K562 (cell line): ENCODE measurements at regions of chr7 and their contacts with region 1.

Region 1: DNA sequence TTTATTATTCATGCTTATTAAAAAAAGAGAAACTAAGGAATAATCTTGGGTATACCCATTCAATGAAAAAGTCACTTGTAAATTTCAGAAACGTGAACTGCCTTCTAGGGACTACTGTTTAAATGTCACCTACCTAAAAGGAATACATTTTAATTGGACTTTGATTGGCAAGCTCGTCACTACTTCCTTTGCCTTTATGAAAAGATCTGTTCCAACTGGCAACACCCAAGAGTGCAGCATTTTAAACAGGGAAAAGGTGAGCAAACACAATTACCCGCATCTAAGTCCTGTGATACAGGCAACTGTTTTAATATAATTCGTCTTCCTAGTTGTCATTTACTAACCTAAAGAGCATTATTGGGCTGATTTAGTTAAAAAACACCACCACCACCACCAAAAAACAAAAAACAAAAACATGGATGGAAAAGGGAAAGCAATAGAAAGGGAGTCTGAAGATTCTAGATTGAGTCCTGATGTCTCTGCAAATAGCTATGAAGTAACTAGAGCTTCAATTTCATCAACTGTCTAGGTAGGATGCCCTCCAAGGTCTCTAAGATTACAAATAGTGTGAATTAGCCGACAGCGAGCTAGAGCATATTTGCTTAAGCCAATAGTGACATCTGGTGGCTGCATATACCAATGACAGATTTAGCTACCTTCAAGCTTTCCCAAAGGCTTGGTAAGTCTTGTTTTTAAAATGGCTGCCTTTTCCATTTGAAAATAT is 33.8 kb upstream of the ICA1 start:
- DNase-seq: peak; percentile 50 to 87 (median 62)
- ATAC-seq: peak; percentile 99
- H3K4me3 ChIP-seq: no peak overlapping the region
- H3K27ac ChIP-seq: no peak overlapping the region
- H3K4me1 ChIP-seq: peaks cover 0 to 3% of the 10 kb centered on the region in 2 experiments; a peak in 1 of 5 replicates
- H3K27me3 ChIP-seq: no peaks in the 10 kb centered on the region
- CTCF ChIP-seq: peak; percentile 70 to 89 (median 80)
- EP300 ChIP-seq: no peak
- POLR2A ChIP-seq: no peak
- RAD21 ChIP-seq: peak; percentile 97 to 98

Region 2: GRCh38 chr7:7424151-7424873 is 871.5 kb before region 1 on chr7:
- CTCF ChIA-PET with region 1: no interaction called
- POLR2A ChIA-PET with region 1: no interaction called
- in situ Hi-C with region 1: loop called (anchors 10 kb)
- intact Hi-C with region 1: loop called (anchors 1 kb)
- DNase-seq: peak; percentile 21 to 76 (median 40)
- ATAC-seq: peak; percentile 97
- H3K4me3 ChIP-seq: peak overlapping the region; percentile 34
- H3K27ac ChIP-seq: no peak overlapping the region
- H3K4me1 ChIP-seq: peaks cover 0 to 5% of the 10 kb centered on the region in 2 experiments; a peak in 2 of 5 replicates
- H3K27me3 ChIP-seq: peaks cover 0 to 6% of the 10 kb centered on the region in 2 experiments; a peak in 4 of 5 replicates
- CTCF ChIP-seq: peak; percentile 71 to 87 (median 86)
- EP300 ChIP-seq: no peak
- POLR2A ChIP-seq: no peak
- RAD21 ChIP-seq: peak; percentile 83 to 90

Region 3: GRCh38 chr7:7595451-7595850 is 700.3 kb before region 1 on chr7:
- CTCF ChIA-PET with region 1: interaction called, 3 read pairs
- POLR2A ChIA-PET with region 1: no interaction called
- in situ Hi-C with region 1: no loop called
- intact Hi-C with region 1: loop called (anchors 5 kb)
- DNase-seq: peak; percentile 14 to 40 (median 24)
- ATAC-seq: peak; percentile 61; the same call in 2 of the 3 replicates
- H3K4me3 ChIP-seq: no peak overlapping the region
- H3K27ac ChIP-seq: no peak overlapping the region
- H3K4me1 ChIP-seq: no peaks in the 10 kb centered on the region
- H3K27me3 ChIP-seq: no peaks in the 10 kb centered on the region
- CTCF ChIP-seq: peak in 1 of 3 experiments; percentile 52; a peak in 2 of 6 replicates
- EP300 ChIP-seq: no peak
- POLR2A ChIP-seq: no peak
- RAD21 ChIP-seq: peak; percentile 53 to 75

Region 4: DNA sequence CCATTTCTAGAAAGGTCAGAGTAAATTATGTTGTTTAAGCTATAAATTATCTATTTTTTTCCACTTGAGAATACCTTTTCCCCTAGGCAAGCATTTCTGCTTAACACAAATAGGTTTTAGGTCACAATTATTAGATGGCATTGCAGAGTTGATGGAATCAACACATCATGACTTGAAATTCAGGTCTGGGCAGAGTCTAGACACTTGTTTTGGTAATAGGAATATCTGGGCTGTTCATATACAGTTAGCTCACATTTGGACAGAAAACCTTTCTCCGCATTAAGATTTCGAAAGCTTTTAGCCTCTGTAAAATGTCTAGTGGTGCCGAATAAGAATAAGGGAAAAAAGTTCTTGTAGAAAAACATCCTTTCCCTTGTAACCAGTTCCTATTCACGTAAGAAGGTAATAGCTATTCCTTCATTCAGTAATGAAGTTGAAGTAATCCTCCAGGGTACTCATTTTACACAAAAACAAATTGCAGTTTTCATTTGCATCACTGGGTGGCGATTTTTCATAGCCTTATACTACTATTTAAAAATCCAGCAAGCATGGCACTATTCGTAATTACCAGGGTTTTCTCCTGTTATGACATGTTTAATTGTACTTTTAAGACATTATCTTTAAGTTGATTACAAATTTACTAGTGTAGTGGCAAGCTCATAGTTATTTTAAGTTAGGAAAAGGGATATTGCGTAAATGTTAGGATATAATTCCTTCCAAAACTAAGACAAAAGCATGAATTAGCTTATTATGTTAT is 614.4 kb before region 1 on chr7:
- CTCF ChIA-PET with region 1: no interaction called
- POLR2A ChIA-PET with region 1: no interaction called
- in situ Hi-C with region 1: no loop called
- intact Hi-C with region 1: loop called (anchors 5 kb)
- DNase-seq: peak in 2 of 4 experiments; percentile 22 to 62
- ATAC-seq: peak; percentile 88
- H3K4me3 ChIP-seq: no peak overlapping the region
- H3K27ac ChIP-seq: peak overlapping the region; percentile 32; the same call in 1 of the 3 replicates
- H3K4me1 ChIP-seq: peaks cover 0 to 2% of the 10 kb centered on the region in 2 experiments; a peak in 1 of 5 replicates
- H3K27me3 ChIP-seq: no peaks in the 10 kb centered on the region
- CTCF ChIP-seq: peak; percentile 21 to 66 (median 46); a peak in 4 of 6 replicates
- EP300 ChIP-seq: no peak
- POLR2A ChIP-seq: no peak
- RAD21 ChIP-seq: peak; percentile 77 to 84

Region 5: GRCh38 chr7:7895754-7896153 is 400.0 kb before region 1 on chr7:
- CTCF ChIA-PET with region 1: no interaction called
- POLR2A ChIA-PET with region 1: no interaction called
- in situ Hi-C with region 1: no loop called
- intact Hi-C with region 1: loop called (anchors 10 kb)
- DNase-seq: no peak
- ATAC-seq: no peak
- H3K4me3 ChIP-seq: no peak overlapping the region
- H3K27ac ChIP-seq: no peak overlapping the region
- H3K4me1 ChIP-seq: no peaks in the 10 kb centered on the region
- H3K27me3 ChIP-seq: no peaks in the 10 kb centered on the region
- CTCF ChIP-seq: no peak
- EP300 ChIP-seq: no peak
- POLR2A ChIP-seq: no peak
- RAD21 ChIP-seq: no peak

Region 6: DNA sequence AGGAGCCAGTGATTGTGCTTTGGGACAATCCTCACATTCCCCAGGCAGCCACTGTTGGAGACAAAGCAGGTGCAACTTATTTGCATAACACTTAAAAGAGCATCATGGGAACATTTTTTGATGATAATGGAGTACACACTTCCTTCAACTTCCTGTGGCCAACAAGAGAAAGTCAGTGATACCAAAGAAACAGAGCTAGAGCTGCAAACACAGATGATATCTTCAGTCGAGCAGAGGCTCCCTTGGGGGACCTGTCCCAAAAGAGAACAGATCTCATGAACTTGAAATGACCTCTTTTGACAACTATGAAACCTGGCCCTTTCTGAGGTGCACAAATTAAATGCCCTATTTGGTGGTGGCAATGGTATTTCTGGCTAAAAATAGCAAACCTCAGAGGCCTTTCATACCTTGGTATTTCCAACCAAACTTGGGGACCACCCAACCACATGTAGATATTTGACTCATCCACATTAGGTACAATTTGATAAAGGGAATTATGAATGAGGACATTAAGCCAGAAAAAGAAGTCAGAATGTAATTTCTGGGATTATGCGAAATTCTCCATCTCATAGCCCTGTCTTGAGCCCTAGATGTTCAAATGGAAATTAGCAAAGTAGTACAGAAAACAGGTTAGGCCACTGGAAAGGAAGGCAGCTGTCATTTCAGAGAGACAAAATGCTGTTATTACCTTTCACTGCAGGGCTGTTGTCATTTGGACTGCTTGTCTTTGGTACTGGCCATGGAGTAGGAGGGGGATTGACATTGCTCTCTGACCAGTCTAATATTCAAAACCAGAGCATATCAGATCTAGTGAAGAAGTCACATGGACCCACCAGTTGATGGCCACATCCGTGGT is 180.0 kb before region 1 on chr7:
- CTCF ChIA-PET with region 1: no interaction called
- POLR2A ChIA-PET with region 1: interaction called, 3 read pairs
- in situ Hi-C with region 1: no loop called
- intact Hi-C with region 1: loop called (anchors 10 kb)
- DNase-seq: no peak
- ATAC-seq: no peak
- H3K4me3 ChIP-seq: no peak overlapping the region
- H3K27ac ChIP-seq: no peak overlapping the region
- H3K4me1 ChIP-seq: peaks cover 0 to 3% of the 10 kb centered on the region in 2 experiments; a peak in 1 of 5 replicates
- H3K27me3 ChIP-seq: no peaks in the 10 kb centered on the region
- CTCF ChIP-seq: no peak
- EP300 ChIP-seq: no peak
- POLR2A ChIP-seq: no peak
- RAD21 ChIP-seq: no peak

Region 7: DNA sequence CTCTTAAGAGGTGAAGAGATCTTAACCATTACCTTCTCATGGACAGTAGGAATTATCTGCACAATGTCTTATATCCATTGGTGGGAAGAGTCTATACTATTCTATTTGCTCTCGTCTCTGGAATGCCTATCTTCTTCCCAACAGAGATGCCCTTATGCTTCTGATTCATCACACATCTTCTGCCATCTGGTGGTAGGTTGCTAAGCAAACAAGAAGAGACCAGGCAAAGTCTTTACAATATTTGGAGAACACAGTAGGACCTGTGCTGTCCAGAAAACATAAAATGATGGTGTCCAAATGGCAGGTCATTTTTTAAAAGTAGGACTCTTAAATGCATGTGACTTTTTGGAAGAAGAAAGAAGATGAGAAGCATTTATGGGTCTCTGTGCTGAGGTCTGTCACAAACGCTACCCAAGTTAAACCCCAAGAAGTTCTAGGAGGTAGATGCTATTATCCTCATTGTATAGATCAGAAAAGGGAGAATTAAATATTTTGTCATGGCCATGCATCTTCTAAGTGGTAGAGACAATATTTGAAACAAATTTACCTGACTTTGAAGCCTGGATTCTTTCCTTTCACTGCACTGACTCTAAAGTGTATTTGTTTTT is 69.8 kb after region 1 on chr7:
- CTCF ChIA-PET with region 1: no interaction called
- POLR2A ChIA-PET with region 1: interaction called, 3 read pairs
- in situ Hi-C with region 1: no loop called
- intact Hi-C with region 1: loop called (anchors 5 kb)
- DNase-seq: peak in 3 of 4 experiments; percentile 18 to 65 (median 22)
- ATAC-seq: peak; percentile 92
- H3K4me3 ChIP-seq: no peak overlapping the region
- H3K27ac ChIP-seq: no peak overlapping the region
- H3K4me1 ChIP-seq: no peaks in the 10 kb centered on the region
- H3K27me3 ChIP-seq: no peaks in the 10 kb centered on the region
- CTCF ChIP-seq: peak; percentile 59 to 67 (median 61)
- EP300 ChIP-seq: no peak
- POLR2A ChIP-seq: no peak
- RAD21 ChIP-seq: peak; percentile 47 to 76; a peak in 3 of 4 replicates